ENCODE measurements at regions of chr1 and their contacts with region 1.

Region 1: DNA sequence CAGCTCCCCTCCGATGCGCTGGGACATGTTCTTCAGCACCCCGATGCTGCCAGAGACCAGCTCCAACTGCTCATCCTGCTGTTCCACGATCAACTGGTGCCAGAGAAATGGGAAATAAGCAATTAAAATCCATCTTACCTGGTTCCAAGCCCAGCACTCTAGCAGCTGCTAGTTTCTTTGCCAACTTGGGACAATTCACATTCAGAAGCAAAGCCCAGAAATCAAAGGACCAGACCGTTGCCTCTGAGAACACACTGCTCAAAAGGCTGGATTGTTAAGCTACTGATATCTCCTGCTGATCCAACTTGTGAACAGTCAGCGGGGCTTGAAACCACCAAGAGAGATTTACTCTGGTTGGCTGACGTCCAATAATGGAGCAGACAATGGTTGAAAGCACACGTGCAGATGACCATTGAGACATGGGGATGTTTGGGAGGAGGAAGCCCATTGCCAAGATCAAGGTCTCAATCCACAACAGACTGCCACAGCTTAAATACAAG is 34.4 kb downstream of the STX6 start:
- DNase-seq: no peak
- H3K4me3 ChIP-seq: no peak overlapping the region
- H3K27ac ChIP-seq: no peak overlapping the region
- H3K4me1 ChIP-seq: no peaks in the 10 kb centered on the region
- CTCF ChIP-seq: no peak

Region 2: GRCh38 chr1:180947901-180948640 is 40.2 kb before region 1 on chr1:
- CTCF ChIA-PET with region 1: interaction called, 16 read pairs
- POLR2A ChIA-PET with region 1: no interaction called
- intact Hi-C with region 1: no loop called
- DNase-seq: no peak
- H3K4me3 ChIP-seq: no peak overlapping the region
- H3K27ac ChIP-seq: no peak overlapping the region
- H3K4me1 ChIP-seq: no peaks in the 10 kb centered on the region
- CTCF ChIP-seq: no peak

Region 3: DNA sequence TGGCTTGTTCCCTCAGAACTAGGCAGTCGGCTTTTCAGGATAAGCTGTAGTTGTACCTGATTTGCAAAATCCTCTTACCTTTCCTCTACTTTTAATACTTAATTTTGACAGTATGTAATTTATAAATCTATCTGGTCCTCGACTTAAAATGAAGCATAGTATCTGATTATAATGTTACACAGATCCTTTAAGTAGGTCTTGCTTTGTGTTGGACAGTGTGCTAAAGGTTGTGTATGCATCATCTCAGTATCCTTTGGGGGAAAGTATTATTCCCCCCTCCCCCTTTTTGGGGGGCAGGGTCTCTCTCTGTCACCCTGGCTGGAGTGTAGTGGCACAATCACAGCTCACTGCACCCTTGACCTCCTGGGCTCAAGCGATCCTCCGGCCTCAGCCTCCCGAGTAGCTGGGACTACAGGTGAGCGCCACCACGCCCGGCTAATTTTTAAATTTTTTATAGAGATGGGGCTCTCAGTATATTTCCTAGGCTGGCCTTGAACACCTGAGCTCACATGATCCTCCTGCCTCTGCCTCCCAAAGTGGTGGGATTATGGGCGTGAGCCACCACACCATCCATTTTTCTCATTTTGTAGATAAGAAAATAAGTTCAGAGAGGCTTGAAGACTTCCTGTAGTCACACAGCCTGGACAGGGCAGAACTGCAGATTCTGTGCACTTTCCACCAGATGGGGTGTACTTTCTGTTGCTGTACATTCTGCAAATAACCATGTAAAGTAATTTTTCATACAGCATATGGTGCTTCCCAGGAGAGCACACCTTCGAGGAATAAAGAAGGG is 35.2 kb after region 1 on chr1:
- CTCF ChIA-PET with region 1: no interaction called
- POLR2A ChIA-PET with region 1: no interaction called
- intact Hi-C with region 1: no loop called
- DNase-seq: no peak
- H3K4me3 ChIP-seq: peak overlapping the region; percentile 58
- H3K27ac ChIP-seq: no peak overlapping the region
- H3K4me1 ChIP-seq: peaks cover 33% of the 10 kb centered on the region
- CTCF ChIP-seq: no peak

Region 4: GRCh38 chr1:181479137-181479745 is 490.9 kb after region 1 on chr1:
- CTCF ChIA-PET with region 1: no interaction called
- POLR2A ChIA-PET with region 1: no interaction called
- intact Hi-C with region 1: no loop called
- DNase-seq: peak; percentile 57
- H3K4me3 ChIP-seq: no peak overlapping the region
- H3K27ac ChIP-seq: no peak overlapping the region
- H3K4me1 ChIP-seq: no peaks in the 10 kb centered on the region
- CTCF ChIP-seq: peak; percentile 83

Measured in OCI-LY7 (cell line).